MCF 10A (cell line): ENCODE measurements at regions of chr4 and their contacts with region 1.

Region 1: DNA sequence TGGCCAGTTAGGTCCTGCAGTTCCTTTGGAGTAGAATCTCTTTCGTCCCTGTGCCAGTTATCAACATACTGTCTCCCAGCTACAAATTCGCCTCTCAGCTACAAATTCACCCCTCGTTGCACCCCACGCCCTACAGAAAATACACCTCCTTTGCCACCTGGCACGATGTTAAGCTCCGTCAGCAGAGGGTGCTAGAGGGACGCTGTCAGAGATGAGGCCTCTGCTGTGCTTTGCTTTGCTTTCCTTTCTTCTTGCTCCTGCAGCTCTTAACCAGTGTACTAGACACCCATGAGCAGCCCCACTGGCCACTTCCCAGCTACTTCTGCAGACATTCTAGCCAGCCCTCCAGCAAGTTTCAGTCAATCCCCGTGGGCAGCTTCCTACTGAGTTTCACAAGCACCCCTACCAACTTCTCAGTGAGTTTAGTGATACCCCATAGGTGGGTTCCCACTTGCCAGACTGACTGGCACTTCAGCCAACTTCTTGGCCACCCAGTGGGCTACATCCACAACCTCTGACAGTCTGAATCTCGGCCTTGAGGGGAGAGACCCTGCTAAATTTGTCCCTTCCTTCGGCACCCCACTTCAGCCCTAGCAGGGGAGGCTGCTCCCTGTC is 21.8 kb downstream of the HAUS3 start:
- DNase-seq: peak; percentile 78
- H3K4me3 Mint-ChIP-seq: no peak overlapping the region
- H3K27ac Mint-ChIP-seq: peak overlapping the region; percentile 21
- H3K4me1 Mint-ChIP-seq: peaks cover 8% of the 10 kb centered on the region
- H3K27me3 Mint-ChIP-seq: no peaks in the 10 kb centered on the region
- CTCF ChIP-seq: peak; percentile 90

Region 2: GRCh38 chr4:2194496-2194895 is 25.6 kb before region 1 on chr4:
- CTCF ChIA-PET with region 1: interaction called, 10 read pairs
- POLR2A ChIA-PET with region 1: no interaction called
- intact Hi-C with region 1: no loop called
- DNase-seq: no peak
- H3K4me3 Mint-ChIP-seq: no peak overlapping the region
- H3K27ac Mint-ChIP-seq: no peak overlapping the region
- H3K4me1 Mint-ChIP-seq: no peaks in the 10 kb centered on the region
- H3K27me3 Mint-ChIP-seq: no peaks in the 10 kb centered on the region
- CTCF ChIP-seq: no peak

Region 3: GRCh38 chr4:2231082-2231481 is 11.0 kb after region 1 on chr4:
- CTCF ChIA-PET with region 1: interaction called, 46 read pairs
- POLR2A ChIA-PET with region 1: interaction called, 3 read pairs
- intact Hi-C with region 1: no loop called
- DNase-seq: no peak
- H3K4me3 Mint-ChIP-seq: no peak overlapping the region
- H3K27ac Mint-ChIP-seq: no peak overlapping the region
- H3K4me1 Mint-ChIP-seq: no peaks in the 10 kb centered on the region
- H3K27me3 Mint-ChIP-seq: no peaks in the 10 kb centered on the region
- CTCF ChIP-seq: no peak

Region 4: DNA sequence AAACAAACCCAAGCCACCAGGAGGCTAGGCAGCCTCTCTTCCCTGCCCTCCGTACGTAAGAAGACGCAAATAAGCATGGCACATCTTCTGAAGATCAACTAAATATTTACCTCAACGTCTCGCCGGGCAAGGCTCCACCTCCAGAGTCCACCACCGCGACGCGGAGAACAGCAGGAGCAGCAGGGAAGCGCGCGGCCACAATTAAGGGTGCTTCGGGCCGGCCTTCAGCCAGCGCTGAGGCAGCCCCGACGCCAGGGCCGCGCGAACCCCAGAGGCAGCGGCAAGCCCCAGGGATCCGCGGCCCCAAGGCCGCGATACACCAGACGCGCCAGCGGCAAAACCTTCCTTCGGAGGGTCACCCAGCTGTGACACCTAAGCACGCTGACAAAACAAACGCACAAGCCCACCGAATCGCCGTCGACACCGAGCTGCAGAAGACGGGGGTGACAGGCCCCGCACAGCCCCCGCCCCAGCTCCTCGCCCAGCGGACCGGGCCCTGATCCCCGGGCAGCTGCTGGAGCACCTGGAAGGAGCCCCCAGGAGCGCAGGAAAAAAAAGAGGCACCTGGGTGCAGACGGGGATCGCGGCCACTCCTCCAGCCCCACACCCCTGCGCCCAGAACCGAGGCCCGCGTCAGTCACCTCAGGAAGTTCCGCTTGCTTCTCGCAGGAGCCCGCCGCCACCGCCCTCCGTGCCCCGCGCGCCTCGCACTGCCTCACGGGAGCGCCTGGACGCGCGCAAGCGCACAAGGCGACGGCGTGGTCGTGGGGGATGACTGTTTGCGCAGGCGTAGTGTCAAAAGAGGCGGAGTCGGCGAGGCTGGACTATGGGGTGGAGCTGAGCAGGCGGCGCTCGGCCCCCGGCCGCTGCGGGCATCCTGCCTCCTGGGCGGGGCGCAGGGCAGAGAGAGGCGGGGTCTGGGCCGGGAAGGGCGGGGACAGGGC is 21.6 kb after region 1 on chr4 and contains the starts of genes HAUS3 and POLN:
- CTCF ChIA-PET with region 1: interaction called, 12 read pairs
- POLR2A ChIA-PET with region 1: interaction called, 11 read pairs
- intact Hi-C with region 1: no loop called
- DNase-seq: peak; percentile 98
- H3K4me3 Mint-ChIP-seq: peak within 1 kb of the TSS; percentile 80
- H3K27ac Mint-ChIP-seq: peak within 1 kb of the TSS; percentile 90
- H3K4me1 Mint-ChIP-seq: peaks cover 43% of the 10 kb centered on the region
- H3K27me3 Mint-ChIP-seq: no peaks in the 10 kb centered on the region
- CTCF ChIP-seq: no peak
- total RNA-seq, gene HAUS3: 13.3 and 13.9 TPM in 2 replicates
- total RNA-seq, gene POLN: 2.8 and 3.1 TPM in 2 replicates

Region 5: DNA sequence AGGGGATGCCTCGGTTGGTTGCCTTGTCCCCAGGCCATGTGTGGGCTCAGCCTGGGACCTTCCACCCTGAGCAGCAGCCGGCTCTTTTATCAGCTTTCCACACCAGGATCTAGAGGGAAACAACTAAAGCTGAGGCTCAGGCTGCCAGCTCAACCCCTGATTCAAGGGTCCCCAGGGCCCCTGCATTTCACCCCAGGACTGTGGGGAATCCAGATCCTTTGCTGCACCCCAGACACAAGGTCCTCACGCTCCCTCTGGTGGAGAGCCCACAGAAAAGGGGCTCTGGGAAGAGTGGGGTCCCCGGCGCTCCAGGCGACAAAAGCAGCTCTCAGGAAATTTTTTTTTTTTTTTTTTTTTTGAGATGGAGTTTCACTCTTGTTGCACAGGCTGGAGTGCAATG is 134.0 kb after region 1 on chr4:
- CTCF ChIA-PET with region 1: interaction called, 3 read pairs
- POLR2A ChIA-PET with region 1: no interaction called
- intact Hi-C with region 1: loop called (anchors 1 kb)
- DNase-seq: peak; percentile 10
- H3K4me3 Mint-ChIP-seq: no peak overlapping the region
- H3K27ac Mint-ChIP-seq: no peak overlapping the region
- H3K4me1 Mint-ChIP-seq: no peaks in the 10 kb centered on the region
- H3K27me3 Mint-ChIP-seq: no peaks in the 10 kb centered on the region
- CTCF ChIP-seq: peak; percentile 30

Region 6: GRCh38 chr4:2441393-2442174 is 221.5 kb after region 1 on chr4:
- CTCF ChIA-PET with region 1: interaction called, 5 read pairs
- POLR2A ChIA-PET with region 1: interaction called, 3 read pairs
- intact Hi-C with region 1: loop called (anchors 1 kb)
- DNase-seq: peak; percentile 68
- H3K4me3 Mint-ChIP-seq: no peak overlapping the region
- H3K27ac Mint-ChIP-seq: no peak overlapping the region
- H3K4me1 Mint-ChIP-seq: no peaks in the 10 kb centered on the region
- H3K27me3 Mint-ChIP-seq: no peaks in the 10 kb centered on the region
- CTCF ChIP-seq: peak; percentile 47

Region 7: DNA sequence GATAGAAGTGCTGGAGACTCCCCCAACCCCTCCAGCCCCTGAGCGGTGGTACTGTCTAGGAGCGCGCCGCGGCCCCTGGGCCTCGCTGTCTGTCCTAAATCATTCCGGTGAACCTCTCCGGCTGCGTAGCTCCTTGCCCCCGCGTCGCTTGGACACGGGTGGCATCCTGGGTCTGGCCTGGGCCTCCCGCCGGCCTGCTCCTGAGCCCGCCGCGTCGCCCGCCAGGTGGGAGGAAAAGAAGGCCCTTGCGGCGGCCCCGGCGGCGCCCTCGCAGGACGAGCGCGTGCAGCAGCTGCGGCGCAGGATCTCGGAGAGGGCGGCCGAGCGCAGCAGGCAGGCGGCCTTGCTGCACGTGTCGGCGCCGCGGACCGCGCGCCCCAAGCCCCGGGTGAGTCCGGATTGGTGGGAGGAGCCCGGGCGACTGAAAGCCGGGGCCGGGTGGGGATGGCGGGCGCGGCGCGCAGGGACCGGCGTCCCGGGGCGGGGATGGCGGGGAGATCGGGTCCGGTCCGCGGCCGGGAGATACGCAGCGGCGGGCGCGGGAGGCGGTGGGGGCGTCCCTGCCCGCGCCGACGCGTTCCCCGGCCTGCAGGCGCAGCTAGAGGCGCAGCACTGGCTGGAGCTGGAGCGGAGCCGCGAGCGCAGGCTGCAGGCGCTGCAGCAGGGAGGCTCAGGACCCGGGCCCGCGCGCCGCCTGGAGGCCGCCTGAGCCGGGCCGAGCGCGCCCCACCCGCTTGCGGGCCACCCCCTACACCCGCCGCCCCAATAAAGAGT is 242.3 kb after region 1 on chr4:
- CTCF ChIA-PET with region 1: interaction called, 22 read pairs
- POLR2A ChIA-PET with region 1: interaction called, 7 read pairs
- intact Hi-C with region 1: loop called (anchors 1 kb)
- DNase-seq: peak; percentile 52
- H3K4me3 Mint-ChIP-seq: peak overlapping the region; percentile 70
- H3K27ac Mint-ChIP-seq: no peak overlapping the region
- H3K4me1 Mint-ChIP-seq: peaks cover 6% of the 10 kb centered on the region
- H3K27me3 Mint-ChIP-seq: no peaks in the 10 kb centered on the region
- CTCF ChIP-seq: peak; percentile 48